ENCODE measurements at regions of chr2 and their contacts with region 1.

Region 1: GRCh38 chr2:179410552-179411356 is 146.1 kb upstream of the SESTD1 start:
- DNase-seq: peak in 1 of 2 donors; percentile 20
- H3K4me3 ChIP-seq: no peak overlapping the region
- H3K27ac ChIP-seq: no peak overlapping the region
- H3K4me1 ChIP-seq: no peaks in the 10 kb centered on the region
- H3K27me3 ChIP-seq: no peaks in the 10 kb centered on the region
- CTCF ChIP-seq: peak; percentile 36 to 56 (median 50)
- POLR2A ChIP-seq: no peak

Region 2: GRCh38 chr2:179741317-179741716 is 330.6 kb after region 1 on chr2:
- intact Hi-C with region 1: loop called (anchors 5 kb)
- DNase-seq: no peak
- H3K4me3 ChIP-seq: no peak overlapping the region
- H3K27ac ChIP-seq: no peak overlapping the region
- H3K4me1 ChIP-seq: no peaks in the 10 kb centered on the region
- H3K27me3 ChIP-seq: no peaks in the 10 kb centered on the region
- CTCF ChIP-seq: no peak
- POLR2A ChIP-seq: no peak

Region 3: DNA sequence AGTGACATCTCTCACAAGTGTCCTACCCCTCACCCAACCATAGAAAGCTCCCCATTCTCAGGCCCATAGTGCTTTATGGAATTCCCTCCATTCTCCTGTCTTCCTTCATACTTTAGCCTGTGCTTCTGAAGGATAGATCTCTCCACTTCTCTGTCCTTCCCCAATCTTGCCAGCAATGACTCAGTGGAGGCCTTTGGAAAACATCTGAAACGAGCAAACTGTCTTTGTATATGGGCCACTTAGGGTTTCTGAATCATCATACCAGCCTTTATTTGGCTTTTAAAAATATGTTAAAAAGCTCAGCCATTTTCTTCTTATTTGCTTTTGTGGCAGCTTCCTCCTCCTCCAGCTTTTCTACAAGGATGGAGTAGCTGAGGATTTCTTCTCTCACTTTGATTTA is 516.3 kb after region 1 on chr2:
- intact Hi-C with region 1: no loop called
- DNase-seq: no peak
- H3K4me3 ChIP-seq: no peak overlapping the region
- H3K27ac ChIP-seq: no peak overlapping the region
- H3K4me1 ChIP-seq: no peaks in the 10 kb centered on the region
- H3K27me3 ChIP-seq: no peaks in the 10 kb centered on the region
- CTCF ChIP-seq: no peak
- POLR2A ChIP-seq: no peak

Measured in uterus (tissue), 4 donors.